Ascending aorta (tissue), 2 donors: ENCODE measurements at regions of chr12 and their contacts with region 1.

Region 1: GRCh38 chr12:2387103-2387834 is 334.5 kb downstream of the CACNA1C start:
- DNase-seq: peak in 1 of 2 donors; percentile 65
- H3K4me3 ChIP-seq: no peak overlapping the region
- H3K27ac ChIP-seq: peak overlapping the region; percentile 84 to 91
- H3K4me1 ChIP-seq: peaks cover 13 to 45% of the 10 kb centered on the region in 2 donors
- H3K27me3 ChIP-seq: no peaks in the 10 kb centered on the region
- CTCF ChIP-seq: no peak

Region 2: DNA sequence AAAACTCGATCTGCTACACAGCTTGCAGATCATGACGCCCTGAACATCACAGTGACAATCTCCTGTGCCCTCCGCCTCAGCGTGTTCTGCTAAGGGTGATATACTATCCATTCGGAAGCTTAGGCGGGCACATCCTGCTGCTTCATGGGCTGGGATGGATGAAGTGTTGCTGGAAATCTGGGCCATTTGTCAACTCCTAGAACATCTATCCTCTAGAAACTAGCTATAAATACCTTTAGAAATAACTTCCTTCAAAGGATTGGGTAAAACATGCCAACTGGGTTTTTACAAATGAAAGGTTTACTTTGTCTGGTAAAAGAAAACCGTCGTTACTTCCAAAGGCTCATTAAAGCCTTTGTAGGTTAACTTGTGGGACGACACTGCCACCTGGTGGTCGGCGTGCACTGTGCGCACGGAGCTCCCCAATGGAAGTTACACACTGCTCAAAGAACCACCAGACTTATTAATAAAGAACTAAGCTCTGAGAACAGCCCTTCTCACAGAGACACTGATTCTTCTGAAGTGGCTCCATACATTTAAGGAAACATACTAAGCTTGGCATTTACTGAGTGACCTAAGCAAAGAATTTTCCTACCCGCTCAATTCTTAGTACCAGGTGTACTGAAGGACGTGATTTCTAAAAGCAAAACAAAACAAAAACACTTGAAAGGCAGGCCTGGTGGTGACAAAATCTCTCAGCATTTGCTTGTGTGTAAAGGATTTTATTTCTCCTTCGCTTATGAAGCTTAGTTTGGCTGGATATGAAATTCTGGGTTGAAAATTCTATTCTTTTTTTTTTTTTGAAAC is 447.3 kb before region 1 on chr12:
- intact Hi-C with region 1: no loop called
- DNase-seq: peak in 1 of 2 donors; percentile 92
- H3K4me3 ChIP-seq: peak overlapping the region in 1 of 2 donors; percentile 7
- H3K27ac ChIP-seq: peak overlapping the region; percentile 2 to 39
- H3K4me1 ChIP-seq: peaks cover 6 to 19% of the 10 kb centered on the region in 2 donors
- H3K27me3 ChIP-seq: no peaks in the 10 kb centered on the region
- CTCF ChIP-seq: peak; percentile 90 to 93 (median 92)

Region 3: DNA sequence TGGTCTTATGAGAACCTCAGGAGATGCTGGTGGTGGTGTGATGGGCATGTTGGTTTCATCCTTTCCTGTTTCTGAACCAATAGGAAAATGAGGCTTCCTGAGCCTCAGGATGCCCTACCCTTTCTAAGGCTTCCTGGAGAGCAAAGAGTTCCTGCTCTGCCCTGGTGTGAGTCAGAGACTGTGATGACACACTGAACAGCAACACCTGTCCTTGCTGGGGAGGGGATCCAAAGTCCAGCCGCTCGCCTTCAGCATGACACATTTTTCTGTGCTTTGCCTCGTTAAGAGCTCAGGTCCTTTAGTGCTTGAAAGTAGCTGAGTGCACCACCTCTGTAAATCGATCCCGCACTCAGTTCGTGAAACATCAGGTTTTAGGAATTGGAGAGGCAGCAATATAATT is 218.5 kb before region 1 on chr12:
- intact Hi-C with region 1: no loop called
- DNase-seq: no peak
- H3K4me3 ChIP-seq: no peak overlapping the region
- H3K27ac ChIP-seq: peak overlapping the region; percentile 56 to 76
- H3K4me1 ChIP-seq: peaks cover 10 to 38% of the 10 kb centered on the region in 2 donors
- H3K27me3 ChIP-seq: no peaks in the 10 kb centered on the region
- CTCF ChIP-seq: no peak

Region 4: DNA sequence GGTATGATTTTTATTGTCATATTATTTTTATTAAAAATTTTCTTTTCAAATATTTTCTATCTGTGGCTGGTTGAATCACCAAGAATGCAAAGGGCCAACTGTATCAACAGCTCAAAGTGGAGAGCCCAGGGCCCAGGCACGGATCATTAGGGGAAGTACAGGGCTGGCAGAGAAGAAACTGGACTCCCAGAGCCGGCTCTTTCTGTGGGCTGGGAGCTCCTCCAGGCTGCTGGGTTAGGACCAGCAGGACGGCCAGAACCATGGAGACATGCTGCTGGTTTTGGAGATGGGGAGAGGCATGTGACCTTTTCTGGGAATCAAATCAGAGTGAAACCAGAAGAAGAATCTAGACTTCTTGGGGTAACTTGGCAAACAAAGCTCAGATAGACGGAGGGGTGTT is 114.0 kb before region 1 on chr12:
- intact Hi-C with region 1: no loop called
- DNase-seq: peak in 1 of 2 donors; percentile 81
- H3K4me3 ChIP-seq: no peak overlapping the region
- H3K27ac ChIP-seq: peak overlapping the region; percentile 64 to 84
- H3K4me1 ChIP-seq: peaks cover 7 to 25% of the 10 kb centered on the region in 2 donors
- H3K27me3 ChIP-seq: no peaks in the 10 kb centered on the region
- CTCF ChIP-seq: peak; percentile 35 to 81 (median 69)

Region 5: GRCh38 chr12:2301531-2302461 is 85.5 kb before region 1 on chr12:
- intact Hi-C with region 1: loop called (anchors 5 kb)
- DNase-seq: peak in 1 of 2 donors; percentile 90
- H3K4me3 ChIP-seq: peak overlapping the region; percentile 31 to 47
- H3K27ac ChIP-seq: peak overlapping the region; percentile 85 to 86
- H3K4me1 ChIP-seq: peaks cover 14 to 63% of the 10 kb centered on the region in 2 donors
- H3K27me3 ChIP-seq: no peaks in the 10 kb centered on the region
- CTCF ChIP-seq: no peak